ENCODE measurements at regions of chr17 and their contacts with region 1.

Region 1: DNA sequence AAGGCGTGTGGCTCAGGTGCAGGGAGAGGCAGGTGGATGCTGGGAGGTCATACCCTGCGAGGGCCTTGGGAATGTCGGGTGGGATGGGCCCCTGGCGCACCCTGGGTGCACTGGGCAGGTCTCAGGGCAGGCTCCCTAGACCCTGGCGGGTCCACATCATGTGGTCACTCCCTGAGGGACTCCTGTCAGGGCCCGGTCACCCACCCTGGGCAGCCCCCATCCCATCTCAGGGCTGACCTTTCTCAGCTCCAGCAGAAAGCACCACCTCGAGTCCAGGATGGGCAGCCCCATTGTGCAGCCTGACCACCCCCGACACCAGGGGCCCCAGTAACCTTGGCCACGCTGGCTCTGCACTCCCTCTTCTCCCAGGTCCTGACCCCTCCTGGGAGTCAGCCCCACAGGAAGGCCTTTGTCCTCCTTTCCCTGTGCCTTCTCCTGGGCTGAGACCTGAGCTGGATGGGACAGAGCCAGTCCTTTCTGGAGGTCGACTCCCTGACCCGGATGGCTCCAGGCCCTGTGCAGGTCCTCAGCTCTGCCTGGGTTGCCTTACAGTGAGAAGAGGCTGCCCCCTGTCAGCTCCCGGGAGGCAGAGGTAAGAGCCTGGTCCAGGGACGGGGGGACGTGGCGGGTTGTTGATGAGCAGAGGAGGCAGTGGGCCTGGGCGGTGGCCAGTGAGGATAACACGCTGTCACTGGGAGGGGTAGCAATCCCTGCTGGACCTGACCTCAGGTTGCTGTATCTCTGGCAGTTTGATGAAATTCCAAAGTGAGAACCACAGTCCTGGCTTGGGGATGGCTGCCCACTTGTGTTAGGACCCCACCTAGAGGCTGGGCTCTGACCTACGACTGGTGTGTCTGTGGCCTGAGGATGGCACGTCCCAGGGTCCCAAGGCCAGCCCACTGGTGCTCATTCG is 77.9 kb downstream of the GOSR1 start:
- DNase-seq: peak; percentile 30
- ATAC-seq: no peak
- H3K4me3 ChIP-seq: no peak overlapping the region
- H3K4me3 Mint-ChIP-seq: no peak overlapping the region
- H3K27ac ChIP-seq: no peak overlapping the region
- H3K27ac Mint-ChIP-seq: no peak overlapping the region
- H3K4me1 ChIP-seq: peaks cover 20 to 38% of the 10 kb centered on the region in 2 donors
- H3K4me1 Mint-ChIP-seq: peaks cover 34% of the 10 kb centered on the region
- H3K27me3 ChIP-seq: no peaks in the 10 kb centered on the region
- H3K27me3 Mint-ChIP-seq: no peaks in the 10 kb centered on the region
- CTCF ChIP-seq: no peak

Region 2: DNA sequence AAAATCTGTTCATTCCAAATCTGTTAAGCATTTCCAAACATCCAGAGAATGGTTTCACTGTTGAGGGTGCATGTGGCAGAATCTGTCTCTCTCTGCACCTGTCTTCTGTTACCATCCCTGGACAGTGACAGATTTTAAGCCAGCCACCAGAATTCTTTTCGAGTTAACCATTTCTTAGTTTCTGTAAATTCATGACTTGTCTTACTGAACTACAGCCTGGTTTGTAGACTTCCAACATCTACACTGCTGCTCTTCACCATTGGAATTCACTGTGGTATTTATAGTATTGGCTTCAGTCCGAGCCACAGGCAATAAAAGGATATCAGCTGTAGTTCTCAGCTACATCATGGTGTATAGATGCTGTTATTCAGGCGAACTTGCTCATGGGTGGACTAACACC is 30.2 kb before region 1 on chr17:
- CTCF ChIA-PET with region 1: no interaction called
- POLR2A ChIA-PET with region 1: no interaction called
- intact Hi-C with region 1: no loop called
- DNase-seq: no peak
- ATAC-seq: no peak
- H3K4me3 ChIP-seq: no peak overlapping the region
- H3K4me3 Mint-ChIP-seq: no peak overlapping the region
- H3K27ac ChIP-seq: no peak overlapping the region
- H3K27ac Mint-ChIP-seq: no peak overlapping the region
- H3K4me1 ChIP-seq: no peaks in the 10 kb centered on the region
- H3K4me1 Mint-ChIP-seq: no peaks in the 10 kb centered on the region
- H3K27me3 ChIP-seq: no peaks in the 10 kb centered on the region
- H3K27me3 Mint-ChIP-seq: no peaks in the 10 kb centered on the region
- CTCF ChIP-seq: no peak

Region 3: DNA sequence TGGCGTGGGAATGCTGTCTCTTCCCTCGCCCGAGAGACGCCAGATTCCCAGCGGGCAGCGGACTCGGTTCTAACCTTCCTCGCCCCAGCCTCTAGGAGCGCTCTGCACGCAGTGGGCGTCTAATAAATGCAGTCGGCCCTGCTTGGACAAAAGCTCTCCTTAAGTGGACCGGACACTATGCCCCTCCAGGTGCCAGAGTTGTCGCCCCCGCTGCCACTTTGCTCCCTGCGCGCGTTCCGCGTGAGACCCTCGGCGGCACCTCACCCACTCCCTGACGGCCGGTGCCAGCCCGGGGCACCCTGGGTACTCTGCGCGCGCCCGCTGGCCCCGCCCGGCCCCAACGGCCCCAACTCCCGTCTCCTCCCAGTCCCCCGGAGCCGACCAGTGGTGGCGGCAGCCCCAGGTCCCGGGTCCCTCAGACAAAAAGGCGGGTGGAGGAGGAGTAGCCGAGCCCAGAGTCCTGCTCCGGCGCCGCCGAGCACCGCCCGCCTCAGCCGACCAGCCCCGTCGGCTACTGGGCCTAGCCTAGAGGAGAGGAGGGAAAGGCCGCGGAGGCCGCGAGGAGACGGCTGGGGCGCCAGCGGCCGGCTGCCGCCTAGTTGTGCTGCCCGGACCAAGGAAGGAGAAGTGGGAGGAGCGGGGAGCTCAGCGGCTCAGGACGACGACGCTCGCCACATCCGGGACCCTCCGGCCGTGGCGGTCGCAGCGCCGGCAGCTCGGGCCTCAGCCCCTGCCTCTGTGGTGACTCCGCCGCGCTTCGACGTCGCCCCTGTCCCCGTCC is 45.1 kb after region 1 on chr17:
- CTCF ChIA-PET with region 1: no interaction called
- POLR2A ChIA-PET with region 1: no interaction called
- intact Hi-C with region 1: loop called (anchors 2 kb)
- DNase-seq: peak; percentile 83
- ATAC-seq: peak; percentile 85
- H3K4me3 ChIP-seq: peak overlapping the region; percentile 19 to 86 (median 83)
- H3K4me3 Mint-ChIP-seq: peak overlapping the region; percentile 99
- H3K27ac ChIP-seq: peak overlapping the region; percentile 78 to 82
- H3K27ac Mint-ChIP-seq: peak overlapping the region; percentile 91
- H3K4me1 ChIP-seq: peaks cover 17% of the 10 kb centered on the region in 2 donors
- H3K4me1 Mint-ChIP-seq: peaks cover 28% of the 10 kb centered on the region
- H3K27me3 ChIP-seq: no peaks in the 10 kb centered on the region
- H3K27me3 Mint-ChIP-seq: no peaks in the 10 kb centered on the region
- CTCF ChIP-seq: peak; percentile 23

Measured in B cell (primary cell).